ENCODE measurements at regions of chr13 and their contacts with region 1.

Region 1: GRCh38 chr13:52011632-52012511 is at the start of gene ALG11:
- DNase-seq: peak; percentile 99
- H3K4me3 ChIP-seq: peak within 1 kb of the TSS; percentile 95
- H3K27ac ChIP-seq: no peak within 1 kb of the TSS
- H3K4me1 ChIP-seq: peaks cover 16% of the 10 kb centered on the region
- CTCF ChIP-seq: no peak
- total RNA-seq, gene ALG11: 11.6 and 14.1 TPM in 2 replicates

Region 2: GRCh38 chr13:52001120-52001731 is 10.6 kb before region 1 on chr13:
- CTCF ChIA-PET with region 1: no interaction called
- POLR2A ChIA-PET with region 1: no interaction called
- intact Hi-C with region 1: no loop called
- DNase-seq: peak; percentile 75
- H3K4me3 ChIP-seq: no peak overlapping the region
- H3K27ac ChIP-seq: no peak overlapping the region
- H3K4me1 ChIP-seq: no peaks in the 10 kb centered on the region
- CTCF ChIP-seq: peak; percentile 85

Region 3: DNA sequence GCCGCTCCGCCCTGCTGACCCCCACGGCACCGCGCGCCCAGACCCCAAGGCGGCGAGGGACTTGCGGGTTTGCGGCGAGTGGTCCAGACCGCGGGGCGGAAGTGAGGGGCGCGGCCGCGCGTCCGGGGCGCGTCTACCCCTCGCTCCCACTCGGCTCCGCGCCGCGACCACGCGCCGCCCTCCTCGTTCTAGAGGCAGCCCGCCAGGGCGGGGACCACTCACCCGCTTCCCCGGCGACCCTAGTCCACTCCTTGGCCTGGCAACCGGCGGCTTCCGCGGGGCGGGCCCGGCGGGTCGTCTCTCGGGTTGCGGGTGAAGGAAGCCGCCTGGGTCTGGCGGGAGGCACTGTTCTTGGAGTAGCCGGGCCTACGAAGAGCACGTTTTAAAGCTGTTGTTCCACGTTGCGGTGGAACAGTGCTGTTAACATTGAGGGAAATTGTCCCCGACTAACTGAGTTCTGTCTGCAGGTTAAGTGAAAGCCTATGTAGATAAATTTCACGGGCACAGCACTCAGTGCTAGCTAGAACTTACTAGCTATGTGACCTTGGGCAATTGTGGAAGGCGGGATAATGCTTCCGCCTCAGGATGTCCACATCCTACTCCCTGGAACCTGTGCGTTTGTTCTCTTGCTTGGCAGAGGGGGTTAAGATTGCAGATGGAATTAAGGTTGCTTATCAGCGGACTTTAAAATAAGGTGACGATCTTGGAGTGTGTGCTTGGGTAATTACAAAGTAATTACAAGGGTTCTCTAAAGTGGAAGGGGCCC is 147.6 kb after region 1 on chr13 and contains the start of gene NEK3:
- CTCF ChIA-PET with region 1: no interaction called
- POLR2A ChIA-PET with region 1: interaction called, 3 read pairs
- intact Hi-C with region 1: loop called (anchors 1 kb)
- DNase-seq: peak; percentile 83
- H3K4me3 ChIP-seq: peak within 1 kb of the TSS; percentile 84
- H3K27ac ChIP-seq: peak within 1 kb of the TSS; percentile 7
- H3K4me1 ChIP-seq: peaks cover 14% of the 10 kb centered on the region
- CTCF ChIP-seq: no peak
- total RNA-seq, gene NEK3: 18.2 and 28.4 TPM in 2 replicates

Region 4: GRCh38 chr13:52194184-52194868 is 182.5 kb after region 1 on chr13:
- CTCF ChIA-PET with region 1: no interaction called
- POLR2A ChIA-PET with region 1: interaction called, 3 read pairs
- intact Hi-C with region 1: loop called (anchors 5 kb)
- DNase-seq: peak; percentile 89
- H3K4me3 ChIP-seq: peak overlapping the region; percentile 94
- H3K27ac ChIP-seq: peak overlapping the region; percentile 71
- H3K4me1 ChIP-seq: peaks cover 13% of the 10 kb centered on the region
- CTCF ChIP-seq: no peak

Region 5: GRCh38 chr13:52652196-52652979 is 640.5 kb after region 1 on chr13 and contains the start of gene SUGT1:
- CTCF ChIA-PET with region 1: no interaction called
- POLR2A ChIA-PET with region 1: no interaction called
- intact Hi-C with region 1: loop called (anchors 5 kb)
- DNase-seq: peak; percentile 97
- H3K4me3 ChIP-seq: peak within 1 kb of the TSS; percentile 96
- H3K27ac ChIP-seq: peak within 1 kb of the TSS; percentile 87
- H3K4me1 ChIP-seq: peaks cover 34% of the 10 kb centered on the region
- CTCF ChIP-seq: peak; percentile 76
- total RNA-seq, gene SUGT1: 32.1 and 36.6 TPM in 2 replicates

Measured in OCI-LY7 (cell line).